Activated CD4-positive, alpha-beta memory T cell treated with anti-CD3 and anti-CD28 coated beads, Interleukin-2, amount 10 ng/mL, durations not matched to agents 7 days and 5 days (primary cell): ENCODE measurements at regions of chr10 and their contacts with region 1.

Region 1: DNA sequence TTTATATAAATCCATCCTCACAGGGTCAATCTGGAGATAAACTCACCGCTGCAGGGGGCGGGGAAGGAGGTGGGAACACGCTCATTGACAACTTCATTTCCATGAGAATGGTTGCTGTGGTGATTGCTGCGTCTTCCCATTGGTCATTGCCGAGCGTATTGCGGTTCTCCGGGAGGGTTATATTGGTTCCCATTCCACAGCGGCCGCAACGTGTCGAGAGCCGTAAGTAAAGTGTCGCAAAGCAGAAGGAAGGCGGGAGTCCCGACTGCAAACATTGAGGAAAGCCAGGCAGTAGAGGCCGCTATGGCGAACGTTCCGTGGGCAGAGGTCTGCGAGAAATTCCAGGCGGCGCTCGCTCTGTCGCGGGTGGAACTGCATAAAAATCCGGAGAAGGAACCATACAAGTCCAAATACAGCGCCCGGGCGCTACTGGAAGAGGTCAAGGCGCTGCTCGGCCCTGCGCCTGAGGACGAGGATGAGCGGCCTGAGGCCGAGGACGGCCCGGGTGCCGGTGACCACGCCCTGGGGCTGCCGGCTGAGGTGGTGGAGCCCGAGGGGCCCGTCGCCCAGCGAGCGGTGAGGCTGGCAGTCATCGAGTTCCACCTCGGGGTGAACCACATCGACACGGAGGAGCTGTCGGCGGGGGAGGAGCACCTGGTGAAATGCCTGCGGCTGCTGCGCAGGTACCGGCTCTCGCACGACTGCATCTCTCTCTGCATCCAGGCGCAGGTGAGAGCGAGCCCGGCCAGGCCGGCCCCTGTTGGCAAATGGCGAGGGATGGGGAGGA is at the start of gene KIFBP:
- DNase-seq: peak; percentile 89
- H3K4me3 Mint-ChIP-seq: peak within 1 kb of the TSS; percentile 97
- H3K27ac Mint-ChIP-seq: peak within 1 kb of the TSS; percentile 89
- H3K4me1 Mint-ChIP-seq: peaks cover 58% of the 10 kb centered on the region
- H3K27me3 Mint-ChIP-seq: no peaks in the 10 kb centered on the region
- total RNA-seq, gene KIFBP: 16.4 to 18.3 TPM

Region 2: DNA sequence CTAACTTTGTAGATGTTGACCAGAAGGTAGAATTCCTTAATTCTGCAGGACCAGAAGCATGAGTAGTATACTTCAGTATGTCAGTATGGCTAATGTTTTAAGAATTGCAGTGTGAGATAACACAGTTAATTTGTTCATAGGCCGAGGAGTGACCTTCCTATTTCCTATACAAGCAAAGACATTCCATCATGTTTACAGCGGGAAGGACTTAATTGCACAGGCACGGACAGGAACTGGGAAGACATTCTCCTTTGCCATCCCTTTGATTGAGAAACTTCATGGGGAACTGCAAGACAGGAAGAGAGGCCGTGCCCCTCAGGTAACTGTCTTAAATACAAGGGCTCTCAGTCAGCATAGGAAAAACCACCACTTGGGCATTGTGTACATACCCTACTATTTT is 25.6 kb before region 1 on chr10:
- CTCF ChIA-PET with region 1: interaction called, 16 read pairs
- POLR2A ChIA-PET with region 1: interaction called, 3 read pairs
- DNase-seq: no peak
- H3K4me3 Mint-ChIP-seq: no peak overlapping the region
- H3K27ac Mint-ChIP-seq: no peak overlapping the region
- H3K4me1 Mint-ChIP-seq: peaks cover 41% of the 10 kb centered on the region
- H3K27me3 Mint-ChIP-seq: no peaks in the 10 kb centered on the region

Region 3: GRCh38 chr10:68973975-68974374 is 14.7 kb before region 1 on chr10:
- CTCF ChIA-PET with region 1: interaction called, 16 read pairs
- POLR2A ChIA-PET with region 1: interaction called, 12 read pairs
- DNase-seq: no peak
- H3K4me3 Mint-ChIP-seq: no peak overlapping the region
- H3K27ac Mint-ChIP-seq: peak overlapping the region; percentile 12
- H3K4me1 Mint-ChIP-seq: peaks cover 28% of the 10 kb centered on the region
- H3K27me3 Mint-ChIP-seq: no peaks in the 10 kb centered on the region

Region 4: GRCh38 chr10:69092959-69093850 is 104.5 kb after region 1 on chr10:
- CTCF ChIA-PET with region 1: interaction called, 26 read pairs
- POLR2A ChIA-PET with region 1: interaction called, 14 read pairs
- DNase-seq: peak; percentile 88
- H3K4me3 Mint-ChIP-seq: peak overlapping the region; percentile 53
- H3K27ac Mint-ChIP-seq: peak overlapping the region; percentile 72
- H3K4me1 Mint-ChIP-seq: peaks cover 63% of the 10 kb centered on the region
- H3K27me3 Mint-ChIP-seq: no peaks in the 10 kb centered on the region